MCF 10A (cell line): ENCODE measurements at regions of chr20 and their contacts with region 1.

Region 1: DNA sequence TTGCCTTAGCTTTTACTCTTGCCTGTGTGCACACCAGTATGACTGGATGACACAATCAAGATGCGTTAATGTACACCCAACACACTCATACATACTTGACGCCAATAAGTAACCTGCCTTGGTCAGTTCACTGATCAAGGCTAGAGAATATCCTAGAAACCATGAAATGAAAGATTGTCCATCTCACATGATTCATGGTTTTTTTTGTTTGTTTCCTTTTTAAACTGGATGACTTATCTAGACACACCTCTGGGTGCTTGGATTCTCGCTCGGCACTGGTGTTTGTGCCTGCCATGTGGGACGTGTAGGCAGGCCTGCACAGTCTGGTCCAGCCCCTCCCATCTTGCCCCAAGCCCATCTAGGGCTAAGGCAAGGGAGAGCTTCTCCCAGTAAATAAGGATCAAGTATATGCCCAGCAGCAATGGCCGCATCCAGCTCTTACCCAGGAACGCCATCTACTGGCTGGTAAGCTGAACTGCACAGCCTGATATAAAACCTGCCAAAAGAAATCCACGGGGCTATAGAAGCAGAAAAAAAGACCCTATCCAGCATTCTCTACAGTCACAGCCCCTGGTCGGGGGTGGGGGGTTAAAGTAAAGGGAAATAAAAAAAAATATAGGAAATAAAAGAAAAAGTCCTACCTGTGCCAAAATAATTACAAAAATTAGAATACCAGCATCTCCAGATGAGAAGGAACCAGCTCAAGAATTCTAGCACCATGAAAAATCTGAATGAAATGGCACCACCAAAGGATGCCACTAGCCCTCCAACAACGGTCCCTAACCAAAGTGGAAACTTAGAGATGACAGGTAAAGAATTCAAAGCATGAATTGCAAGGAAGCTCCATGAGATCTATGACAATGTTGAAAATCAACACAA is 73.3 kb downstream of the OTOR start:
- DNase-seq: peak; percentile 57
- H3K4me3 Mint-ChIP-seq: no peak overlapping the region
- H3K27ac Mint-ChIP-seq: no peak overlapping the region
- H3K4me1 Mint-ChIP-seq: no peaks in the 10 kb centered on the region
- H3K27me3 Mint-ChIP-seq: peaks cover 75% of the 10 kb centered on the region
- CTCF ChIP-seq: peak; percentile 88

Region 2: DNA sequence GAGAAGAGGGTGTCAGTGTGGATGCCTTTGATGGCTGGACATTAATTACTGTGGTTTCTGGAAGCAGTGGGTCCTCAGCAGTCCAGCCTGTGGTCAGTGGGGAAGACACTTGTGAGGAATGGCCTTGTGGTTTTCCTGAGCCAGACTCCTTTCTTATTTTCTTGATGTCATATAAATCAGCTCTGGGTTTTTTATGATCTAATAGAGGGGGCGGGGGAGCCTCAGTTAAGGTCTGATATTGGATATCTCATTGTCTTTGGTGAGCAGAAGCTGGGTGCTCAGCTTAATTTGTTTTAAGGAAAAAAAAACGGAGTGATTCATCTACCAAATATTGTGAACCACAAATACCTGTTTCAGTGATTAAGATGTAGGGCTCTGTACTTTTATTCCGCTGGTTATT is 11.2 kb before region 1 on chr20:
- CTCF ChIA-PET with region 1: interaction called, 116 read pairs
- POLR2A ChIA-PET with region 1: no interaction called
- intact Hi-C with region 1: no loop called
- DNase-seq: no peak
- H3K4me3 Mint-ChIP-seq: no peak overlapping the region
- H3K27ac Mint-ChIP-seq: no peak overlapping the region
- H3K4me1 Mint-ChIP-seq: no peaks in the 10 kb centered on the region
- H3K27me3 Mint-ChIP-seq: peaks cover 74% of the 10 kb centered on the region
- CTCF ChIP-seq: no peak

Region 3: DNA sequence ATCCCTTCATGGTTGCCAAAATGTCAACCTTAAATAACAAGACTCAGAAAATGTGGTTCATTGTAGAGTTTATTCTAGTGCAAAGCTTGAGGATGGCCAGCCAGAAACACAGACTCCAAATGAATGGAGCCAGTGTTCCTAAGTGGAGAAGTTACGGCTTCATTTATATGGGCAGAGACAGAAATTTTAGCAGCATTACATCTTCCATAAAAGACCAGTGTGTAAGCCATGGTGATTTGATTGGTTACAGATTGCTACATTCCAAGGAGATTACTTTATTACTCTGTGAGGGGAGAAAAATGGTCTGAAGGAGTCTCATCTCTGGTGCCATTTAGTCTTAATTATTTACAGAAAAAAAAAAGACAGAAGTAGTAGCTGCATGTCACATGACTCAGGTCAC is 24.6 kb after region 1 on chr20:
- CTCF ChIA-PET with region 1: interaction called, 18 read pairs
- POLR2A ChIA-PET with region 1: no interaction called
- intact Hi-C with region 1: no loop called
- DNase-seq: no peak
- H3K4me3 Mint-ChIP-seq: no peak overlapping the region
- H3K27ac Mint-ChIP-seq: no peak overlapping the region
- H3K4me1 Mint-ChIP-seq: no peaks in the 10 kb centered on the region
- H3K27me3 Mint-ChIP-seq: peaks cover 31% of the 10 kb centered on the region
- CTCF ChIP-seq: no peak